Gastrocnemius medialis (tissue), 4 donors: ENCODE measurements at regions of chr15 and their contacts with region 1.

Region 1: GRCh38 chr15:54212635-54213034 is 234.4 kb downstream of the UNC13C start:
- DNase-seq: no peak
- ATAC-seq: peak; percentile 90 to 96
- H3K4me3 ChIP-seq: peak overlapping the region; percentile 26 to 39 (median 32)
- H3K27ac ChIP-seq: peak overlapping the region; percentile 65 to 83 (median 74)
- H3K4me1 ChIP-seq: peaks cover 4 to 8% of the 10 kb centered on the region in 2 donors
- H3K27me3 ChIP-seq: no peaks in the 10 kb centered on the region
- CTCF ChIP-seq: no peak
- POLR2A ChIP-seq: peak in 1 of 2 donors; percentile 30

Region 2: DNA sequence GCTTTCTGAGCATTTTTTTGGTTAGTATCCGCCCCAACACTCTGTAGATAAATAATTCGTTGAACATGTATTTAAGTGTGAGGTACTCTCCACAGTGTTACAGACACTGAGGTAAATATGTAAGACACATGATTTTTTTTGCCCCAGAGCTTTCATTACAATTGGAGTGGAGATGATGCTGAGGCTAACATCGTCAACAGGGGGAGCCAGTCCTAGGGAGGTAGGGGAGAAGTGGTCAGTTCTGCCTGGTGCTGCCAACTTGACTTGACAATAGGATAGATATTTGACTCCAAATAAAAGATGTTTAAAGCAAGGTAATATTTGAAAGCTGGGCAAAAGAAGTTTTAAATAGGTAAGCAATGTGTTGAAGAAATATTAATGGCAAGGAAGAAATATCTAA is 61.3 kb after region 1 on chr15:
- in situ Hi-C with region 1: no loop called
- intact Hi-C with region 1: loop called (anchors 10 kb)
- DNase-seq: no peak
- ATAC-seq: no peak
- H3K4me3 ChIP-seq: no peak overlapping the region
- H3K27ac ChIP-seq: no peak overlapping the region
- H3K4me1 ChIP-seq: peaks cover 0 to 13% of the 10 kb centered on the region in 2 donors
- H3K27me3 ChIP-seq: no peaks in the 10 kb centered on the region
- CTCF ChIP-seq: no peak
- POLR2A ChIP-seq: no peak